HEK293 (cell line): ENCODE measurements at regions of chr1 and their contacts with region 1.

Region 1: GRCh38 chr1:156860113-156860627 is 495 bp upstream of the NTRK1 start:
- H3K4me3 ChIP-seq: peak overlapping the region; percentile 35
- H3K27ac ChIP-seq: no peak overlapping the region
- H3K4me1 ChIP-seq: peaks cover 2% of the 10 kb centered on the region; the same call in 1 of the 2 replicates
- CTCF ChIP-seq: peak; percentile 90

Region 2: DNA sequence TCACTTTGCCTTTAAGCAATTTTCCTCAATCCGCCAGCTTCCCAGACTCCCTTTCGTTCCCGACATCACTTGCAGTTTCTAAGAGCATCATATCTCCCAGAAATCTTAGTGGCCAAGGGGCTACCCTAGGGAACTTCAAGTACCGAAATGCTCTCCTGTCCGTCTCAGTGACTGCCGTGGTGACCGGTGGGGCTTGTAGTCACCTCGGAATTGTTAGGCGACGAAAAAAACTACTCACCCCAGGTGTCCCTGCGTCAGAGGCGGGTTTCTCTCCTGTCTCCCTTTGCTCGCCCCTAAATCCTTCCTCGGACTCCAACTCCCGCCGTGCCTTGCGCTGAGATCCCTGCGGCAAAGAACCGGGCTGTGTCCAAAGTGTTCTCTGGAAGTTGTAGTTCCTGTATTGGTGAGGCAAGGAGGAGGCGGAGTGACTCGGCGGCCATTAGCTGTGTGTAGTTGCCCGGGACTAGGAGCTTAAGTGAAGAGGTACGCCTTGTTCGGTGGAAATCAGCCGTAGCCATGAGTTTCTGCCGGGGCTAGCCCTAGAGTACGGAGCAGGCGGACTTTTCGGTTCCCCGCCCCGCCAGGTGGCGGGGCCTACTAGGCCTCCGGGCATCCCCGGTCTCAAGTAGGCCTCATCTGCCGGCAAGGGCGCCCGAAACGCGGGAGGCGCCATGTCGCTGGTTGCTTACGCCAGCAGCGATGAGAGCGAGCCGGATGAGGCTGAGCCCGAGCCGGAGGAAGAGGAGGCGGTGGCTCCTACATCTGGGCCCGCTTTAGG is 92.9 kb before region 1 on chr1 and contains the start of gene PRCC:
- CTCF ChIA-PET with region 1: interaction called, 16 read pairs
- POLR2A ChIA-PET with region 1: interaction called, 4 read pairs
- H3K4me3 ChIP-seq: peak within 1 kb of the TSS; percentile 92
- H3K27ac ChIP-seq: peak within 1 kb of the TSS; percentile 94
- H3K4me1 ChIP-seq: peaks cover 6% of the 10 kb centered on the region; the same call in 1 of the 2 replicates
- CTCF ChIP-seq: peak; percentile 60

Region 3: DNA sequence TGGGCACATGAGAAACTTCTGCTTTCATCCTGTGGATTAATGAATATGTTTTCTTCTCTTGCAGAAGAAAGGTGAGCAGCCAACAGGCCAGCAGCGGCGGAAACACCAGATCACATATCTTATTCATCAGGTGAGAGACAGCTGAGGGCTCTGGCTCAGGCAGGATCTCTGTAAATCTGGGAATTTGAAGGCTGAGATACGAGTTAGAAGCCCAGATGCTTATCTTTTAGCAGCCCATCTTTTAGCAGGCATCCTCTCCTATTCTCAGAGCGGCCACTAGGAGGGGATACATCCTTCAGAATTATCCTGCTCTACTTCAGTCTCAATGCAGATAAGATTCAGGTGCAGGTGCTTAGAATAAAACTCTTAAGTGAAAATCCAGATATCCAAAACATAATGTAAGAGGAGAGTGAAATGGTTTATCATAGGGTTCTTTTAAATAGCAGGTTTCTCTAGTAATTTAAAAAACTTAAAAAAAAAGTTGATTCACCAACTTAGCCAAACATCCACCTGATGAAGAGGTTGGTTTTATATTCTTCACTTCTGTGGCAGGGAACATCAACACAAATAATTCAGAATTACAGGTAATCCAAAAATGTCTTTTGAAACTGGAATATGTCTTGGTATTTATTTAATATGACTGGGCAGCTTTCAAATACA is 62.8 kb before region 1 on chr1:
- CTCF ChIA-PET with region 1: interaction called, 80 read pairs
- POLR2A ChIA-PET with region 1: no interaction called
- H3K4me3 ChIP-seq: no peak overlapping the region
- H3K27ac ChIP-seq: no peak overlapping the region
- H3K4me1 ChIP-seq: no peaks in the 10 kb centered on the region
- CTCF ChIP-seq: 0 out of 2 replicates have a peak, but pooled peaks have one; percentile 47

Region 4: DNA sequence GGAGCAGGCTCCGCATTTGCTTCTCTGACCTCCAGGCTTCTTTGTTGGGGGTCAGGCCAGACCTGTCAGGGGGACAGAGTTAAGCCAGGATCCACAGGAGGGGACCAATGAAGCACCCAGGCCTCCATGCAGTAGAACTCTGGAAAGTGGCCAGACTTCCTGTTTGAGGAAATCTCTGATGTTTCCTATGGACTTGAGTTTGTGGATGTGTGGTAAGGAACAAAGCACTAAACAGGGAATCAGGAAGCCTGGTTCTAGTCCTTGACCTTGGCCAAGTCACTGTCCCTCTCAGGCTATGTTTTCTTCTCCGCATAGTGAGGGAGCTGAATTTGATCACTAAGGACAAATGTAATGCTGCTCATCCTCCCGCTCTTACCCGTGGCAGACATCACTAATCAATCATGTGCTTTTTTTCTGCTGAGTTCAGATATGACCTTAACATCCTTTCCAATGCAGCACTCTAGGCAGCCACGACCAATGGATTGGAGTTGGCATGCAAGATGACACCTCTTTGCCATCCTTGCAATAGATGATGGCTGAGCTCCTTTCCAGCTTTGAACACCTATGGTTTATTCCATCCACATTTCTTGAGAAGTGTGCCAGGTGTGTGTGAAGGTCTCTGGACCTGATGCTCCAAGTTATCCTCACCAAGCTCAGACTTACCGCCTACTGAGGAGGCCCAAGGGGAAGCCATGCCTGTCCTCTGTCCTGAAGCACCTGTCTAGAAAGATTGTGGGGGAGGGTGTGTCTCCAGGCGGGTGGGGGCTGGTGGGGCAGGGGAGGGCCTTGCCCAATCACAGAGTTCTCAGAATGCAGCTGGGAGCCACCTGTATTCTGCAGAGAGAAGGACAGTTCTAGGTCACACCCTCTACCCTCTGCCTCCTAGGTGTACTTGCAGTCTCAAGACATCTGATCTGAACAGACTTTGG is 53.4 kb before region 1 on chr1:
- CTCF ChIA-PET with region 1: interaction called, 15 read pairs
- POLR2A ChIA-PET with region 1: no interaction called
- H3K4me3 ChIP-seq: no peak overlapping the region
- H3K27ac ChIP-seq: peak overlapping the region; percentile 19
- H3K4me1 ChIP-seq: no peaks in the 10 kb centered on the region
- CTCF ChIP-seq: no peak

Region 5: DNA sequence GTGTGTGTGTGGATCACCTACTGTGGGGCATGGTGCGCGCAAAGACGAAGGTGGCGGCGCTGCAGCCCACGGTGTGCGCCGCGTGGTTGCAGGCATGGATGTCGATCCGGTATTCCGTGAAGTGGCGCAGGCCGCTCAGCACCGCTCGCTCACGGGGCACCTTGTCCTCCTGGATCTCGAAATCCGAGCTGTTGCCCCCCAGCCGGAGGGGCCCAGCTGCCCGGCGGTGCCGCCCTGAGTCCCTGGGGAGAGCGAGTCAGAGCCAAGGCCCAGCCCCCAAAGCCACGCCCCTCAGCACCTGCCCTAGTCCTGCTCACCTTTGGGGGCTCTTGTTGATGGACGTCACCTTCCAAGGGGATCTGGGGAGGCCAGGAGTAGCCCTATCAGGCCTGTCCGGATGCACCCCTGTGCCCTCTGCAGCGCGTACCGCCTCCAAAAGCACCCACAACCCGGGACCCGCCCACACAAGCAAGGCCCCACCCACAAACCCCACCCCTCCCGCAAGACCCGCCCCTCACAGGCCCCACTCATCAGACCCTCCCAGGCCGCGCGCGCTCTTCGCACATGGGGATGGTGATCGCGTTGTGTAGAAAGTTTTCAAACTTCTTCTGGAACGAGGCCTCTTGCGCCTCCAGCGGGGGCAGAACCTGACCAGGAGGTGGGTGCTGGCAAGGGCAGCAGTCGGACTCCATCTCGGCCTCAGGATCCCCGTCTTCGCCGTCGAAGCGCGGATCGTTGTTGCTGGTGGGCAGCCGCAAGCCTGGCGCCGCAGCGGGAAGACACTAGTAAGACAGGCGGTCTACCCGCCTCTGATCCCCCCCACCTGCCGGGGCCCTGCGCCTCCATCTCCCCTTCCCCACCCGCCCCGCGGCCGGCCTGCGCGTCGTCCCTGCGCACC is 14.9 kb before region 1 on chr1:
- CTCF ChIA-PET with region 1: interaction called, 119 read pairs
- POLR2A ChIA-PET with region 1: interaction called, 3 read pairs
- H3K4me3 ChIP-seq: no peak overlapping the region
- H3K27ac ChIP-seq: no peak overlapping the region
- H3K4me1 ChIP-seq: no peaks in the 10 kb centered on the region
- CTCF ChIP-seq: no peak

Region 6: DNA sequence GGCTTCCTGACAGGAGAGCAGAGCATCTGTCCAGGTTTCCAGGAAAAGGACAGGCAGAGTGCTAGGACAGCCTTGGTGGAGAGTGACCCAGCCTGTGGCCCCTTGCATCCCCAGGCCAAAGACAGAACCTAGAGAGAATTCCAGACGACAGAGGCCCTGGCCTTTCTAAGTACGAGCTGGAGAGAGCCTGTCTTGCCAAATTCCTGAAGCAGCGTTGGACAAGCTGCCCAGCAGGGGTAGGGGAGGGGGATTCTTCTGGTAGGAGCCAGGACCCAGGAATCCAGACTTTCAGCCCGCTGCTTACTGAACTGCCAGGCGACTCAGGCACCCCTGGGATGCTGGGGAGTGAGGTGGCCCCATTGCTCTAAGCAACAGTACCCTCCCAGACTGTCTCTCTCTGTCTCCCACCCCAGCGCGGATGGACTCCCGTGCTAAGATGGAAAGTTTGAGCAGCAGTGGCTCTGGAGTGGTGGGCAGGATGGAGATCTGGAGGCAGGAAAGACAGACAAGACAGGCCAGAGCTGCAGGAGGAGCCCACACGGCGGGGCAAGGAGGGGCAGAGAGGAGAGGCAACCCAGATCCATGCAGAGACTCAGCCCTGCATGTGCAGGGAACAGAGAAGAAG is 24.5 kb after region 1 on chr1:
- CTCF ChIA-PET with region 1: interaction called, 79 read pairs
- POLR2A ChIA-PET with region 1: interaction called, 5 read pairs
- H3K4me3 ChIP-seq: no peak overlapping the region
- H3K27ac ChIP-seq: no peak overlapping the region
- H3K4me1 ChIP-seq: no peaks in the 10 kb centered on the region
- CTCF ChIP-seq: no peak

Region 7: DNA sequence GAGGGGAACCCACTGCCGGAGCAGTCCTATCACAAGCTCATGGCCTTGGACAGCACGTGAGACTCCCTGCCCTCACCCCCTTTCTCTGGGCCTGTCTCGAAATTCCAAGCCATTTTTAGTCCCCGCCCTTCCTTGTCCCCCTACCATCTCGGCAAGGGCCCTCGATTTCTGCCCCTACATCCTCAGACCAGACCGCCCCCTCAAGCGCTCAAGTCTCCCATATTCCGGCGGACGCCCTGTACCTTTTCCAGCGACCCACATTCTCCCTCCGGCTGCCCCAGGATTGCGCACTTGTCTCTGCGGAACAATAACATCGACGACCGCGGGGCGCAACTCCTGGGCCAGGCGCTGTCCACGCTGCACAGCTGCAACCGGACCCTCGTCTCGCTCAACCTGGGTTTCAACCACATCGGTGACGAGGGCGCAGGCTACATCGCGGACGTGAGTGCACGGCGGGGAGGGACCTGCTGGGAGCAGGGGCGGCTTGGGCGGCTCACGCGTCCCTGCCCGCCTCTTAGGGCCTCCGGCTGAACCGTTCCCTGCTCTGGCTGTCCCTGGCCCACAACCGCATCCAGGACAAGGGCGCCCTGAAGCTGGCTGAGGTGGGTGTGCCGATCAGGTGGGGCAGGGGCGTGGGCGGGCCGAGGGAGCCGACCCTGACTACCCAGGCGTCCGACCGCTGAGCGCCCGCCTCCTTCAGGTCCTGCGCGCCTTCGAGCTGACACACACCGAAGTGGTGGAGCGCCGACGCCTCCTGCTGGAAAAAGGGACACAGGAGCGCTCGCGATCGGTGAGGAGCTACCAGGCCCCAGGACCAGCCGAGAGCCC is 67.3 kb after region 1 on chr1:
- CTCF ChIA-PET with region 1: interaction called, 29 read pairs
- POLR2A ChIA-PET with region 1: interaction called, 4 read pairs
- H3K4me3 ChIP-seq: peak overlapping the region; percentile 33
- H3K27ac ChIP-seq: no peak overlapping the region; the same call in 1 of the 2 replicates
- H3K4me1 ChIP-seq: no peaks in the 10 kb centered on the region; the same call in 1 of the 2 replicates
- CTCF ChIP-seq: peak; percentile 90